ENCODE measurements at regions of chr14 and their contacts with region 1.

Region 1: DNA sequence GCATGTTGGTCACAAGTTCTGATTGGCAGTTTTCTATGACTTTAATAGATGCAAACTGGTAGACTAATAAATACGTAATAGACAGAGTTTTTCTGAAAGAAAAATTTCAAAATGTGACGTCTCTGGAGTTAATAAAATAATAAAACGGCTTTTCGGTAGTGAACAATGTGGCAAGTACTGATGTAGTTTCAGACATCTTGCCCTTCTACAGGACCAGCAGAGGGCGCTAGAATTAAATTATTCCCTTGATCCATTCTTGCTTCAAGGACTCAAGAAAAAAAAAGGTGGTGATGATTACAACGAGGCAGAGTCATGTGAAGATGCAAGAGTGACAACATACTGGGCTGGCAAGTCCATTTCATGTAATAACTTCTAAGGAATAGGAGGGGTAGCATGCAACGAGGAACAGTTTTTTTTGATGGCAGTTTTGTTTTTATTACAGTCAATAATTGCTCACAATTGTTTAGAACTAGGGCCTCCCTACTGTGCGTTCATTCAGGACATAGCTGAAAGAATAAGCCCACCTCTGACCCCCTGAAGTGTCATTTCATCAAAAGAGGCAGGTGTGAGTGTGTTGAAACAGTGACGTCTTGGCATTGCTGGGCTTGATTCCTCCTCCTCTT is 101.0 kb upstream of the GZMB start:
- DNase-seq: no peak
- ATAC-seq: peak in 1 of 4 donors; percentile 27
- H3K4me3 ChIP-seq: no peak overlapping the region
- H3K27ac ChIP-seq: no peak overlapping the region
- H3K4me1 ChIP-seq: no peaks in the 10 kb centered on the region
- H3K27me3 ChIP-seq: no peaks in the 10 kb centered on the region
- CTCF ChIP-seq: peak; percentile 55

Region 2: DNA sequence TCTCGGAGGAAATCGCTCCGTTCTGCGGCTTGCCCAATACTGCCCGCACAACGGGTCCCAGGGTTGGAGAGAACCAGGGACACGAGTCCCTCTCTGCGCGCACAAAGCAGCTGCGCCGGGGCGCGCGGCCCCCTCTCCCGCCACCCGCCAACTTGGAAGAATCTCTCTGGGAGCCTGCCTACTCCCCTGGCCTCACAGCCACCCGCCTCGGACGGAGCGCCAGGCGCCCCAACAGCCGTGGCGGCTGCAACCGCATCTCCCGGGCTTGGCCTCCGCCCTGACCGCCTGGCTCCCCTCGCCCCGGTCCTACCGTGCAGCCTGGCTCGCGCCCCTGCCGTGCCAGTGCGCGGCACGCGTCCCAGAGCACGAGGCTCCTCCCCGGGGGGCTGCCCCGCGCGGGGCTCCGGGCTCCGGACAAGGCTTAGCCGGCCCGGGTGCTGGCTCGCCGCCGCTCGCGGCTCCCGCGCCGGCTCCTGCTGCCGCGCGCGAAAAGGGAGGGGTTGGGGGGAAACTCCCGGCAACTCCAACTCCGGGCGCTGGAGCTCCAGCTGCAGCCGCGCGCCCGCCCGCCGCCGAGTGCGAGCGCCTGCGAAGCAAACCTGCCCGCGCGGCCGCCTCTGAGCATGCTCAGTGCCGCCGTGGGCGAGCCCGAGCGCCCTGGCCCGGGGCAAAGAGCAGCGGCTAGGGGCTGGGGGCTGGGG is 314.7 kb after region 1 on chr14 and contains the start of gene STXBP6:
- intact Hi-C with region 1: loop called in 1 of 2 experiments (anchors 10 kb)
- DNase-seq: peak; percentile 76 to 80
- ATAC-seq: peak; percentile 46 to 80 (median 75)
- H3K4me3 ChIP-seq: peak within 1 kb of the TSS; percentile 71
- H3K27ac ChIP-seq: peak within 1 kb of the TSS; percentile 46
- H3K4me1 ChIP-seq: no peaks in the 10 kb centered on the region
- H3K27me3 ChIP-seq: peaks cover 0 to 51% (median 5%) of the 10 kb centered on the region in 3 donors
- CTCF ChIP-seq: no peak
- total RNA-seq, gene STXBP6: 1.1 to 3.5 (median 2.5) TPM

Region 3: GRCh38 chr14:25132732-25133422 is 397.9 kb after region 1 on chr14:
- intact Hi-C with region 1: loop called in 1 of 2 experiments (anchors 5 kb)
- DNase-seq: peak; percentile 55 to 68
- ATAC-seq: peak; percentile 54 to 88 (median 76)
- H3K4me3 ChIP-seq: no peak overlapping the region
- H3K27ac ChIP-seq: no peak overlapping the region
- H3K4me1 ChIP-seq: no peaks in the 10 kb centered on the region
- H3K27me3 ChIP-seq: peaks cover 0 to 8% (median 0%) of the 10 kb centered on the region in 3 donors
- CTCF ChIP-seq: peak; percentile 63

Region 4: GRCh38 chr14:25150934-25151790 is 416.2 kb after region 1 on chr14:
- intact Hi-C with region 1: loop called in 1 of 2 experiments (anchors 5 kb)
- DNase-seq: no peak
- ATAC-seq: no peak
- H3K4me3 ChIP-seq: no peak overlapping the region
- H3K27ac ChIP-seq: no peak overlapping the region
- H3K4me1 ChIP-seq: no peaks in the 10 kb centered on the region
- H3K27me3 ChIP-seq: no peaks in the 10 kb centered on the region
- CTCF ChIP-seq: peak; percentile 63